ENCODE measurements at regions of chr18 and their contacts with region 1.

Region 1: DNA sequence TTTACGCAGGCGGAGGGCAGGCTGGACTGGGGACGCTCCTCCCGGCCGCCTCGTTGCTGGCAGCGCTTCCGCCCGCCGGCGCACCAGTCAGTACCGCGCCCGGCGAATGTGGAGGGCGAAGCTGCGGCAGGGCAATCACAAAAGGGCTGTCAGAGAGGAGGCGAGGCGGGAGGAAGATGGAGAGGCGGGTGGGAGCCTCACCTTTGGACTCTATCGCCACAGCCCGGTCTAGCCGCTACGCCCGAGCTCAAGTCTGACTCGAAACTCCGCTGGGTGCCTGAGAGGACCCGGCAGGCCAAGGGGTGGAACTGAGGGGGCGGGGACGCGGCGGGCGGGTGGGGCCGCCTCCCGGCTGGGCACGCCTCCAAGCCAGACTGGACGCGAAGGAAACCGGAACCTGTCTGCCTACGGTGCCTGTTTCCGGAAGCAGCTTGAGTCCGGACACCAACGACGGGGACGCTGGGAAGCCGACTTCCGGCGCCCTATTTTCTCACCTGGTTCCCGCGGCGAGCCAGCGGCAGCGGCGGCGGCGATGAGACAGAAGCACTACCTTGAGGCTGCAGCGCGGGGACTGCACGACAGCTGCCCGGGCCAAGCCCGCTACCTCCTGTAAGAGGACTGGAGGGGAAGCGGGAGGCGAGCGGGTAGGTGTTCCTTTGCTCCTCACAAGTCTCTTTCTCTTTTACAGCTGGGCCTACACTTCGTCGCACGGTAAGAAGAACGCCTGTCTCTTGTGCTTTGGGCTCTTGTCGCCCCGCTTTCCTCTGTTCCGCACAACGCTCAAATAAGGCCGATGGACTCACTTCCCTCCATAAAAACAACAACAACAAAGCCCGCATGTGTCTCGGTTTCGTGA is at the start of gene RMP24:
- DNase-seq: peak; percentile 80 to 93 (median 90)
- ATAC-seq: peak; percentile 94
- H3K4me3 ChIP-seq: peak within 1 kb of the TSS; percentile 76
- H3K4me3 Mint-ChIP-seq: peak within 1 kb of the TSS; percentile 83 to 100 (median 96)
- H3K27ac ChIP-seq: peak within 1 kb of the TSS; percentile 82
- H3K27ac Mint-ChIP-seq: peak within 1 kb of the TSS; percentile 91 to 99 (median 96)
- H3K4me1 ChIP-seq: peaks cover 33% of the 10 kb centered on the region in 2 donors
- H3K4me1 Mint-ChIP-seq: peaks cover 36 to 78% (median 67%) of the 10 kb centered on the region in 7 donors
- H3K27me3 ChIP-seq: no peaks in the 10 kb centered on the region
- H3K27me3 Mint-ChIP-seq: no peaks in the 10 kb centered on the region

Region 2: GRCh38 chr18:34867520-34867919 is 1104.9 kb before region 1 on chr18:
- CTCF ChIA-PET with region 1: no interaction called
- POLR2A ChIA-PET with region 1: no interaction called
- intact Hi-C with region 1: loop called (anchors 5 kb)
- DNase-seq: no peak
- ATAC-seq: no peak
- H3K4me3 ChIP-seq: no peak overlapping the region
- H3K4me3 Mint-ChIP-seq: no peak overlapping the region
- H3K27ac ChIP-seq: no peak overlapping the region
- H3K27ac Mint-ChIP-seq: no peak overlapping the region
- H3K4me1 ChIP-seq: no peaks in the 10 kb centered on the region
- H3K4me1 Mint-ChIP-seq: peaks cover 0 to 24% (median 9%) of the 10 kb centered on the region in 7 donors
- H3K27me3 ChIP-seq: no peaks in the 10 kb centered on the region
- H3K27me3 Mint-ChIP-seq: peaks cover 0 to 10% (median 0%) of the 10 kb centered on the region in 5 donors

Region 3: DNA sequence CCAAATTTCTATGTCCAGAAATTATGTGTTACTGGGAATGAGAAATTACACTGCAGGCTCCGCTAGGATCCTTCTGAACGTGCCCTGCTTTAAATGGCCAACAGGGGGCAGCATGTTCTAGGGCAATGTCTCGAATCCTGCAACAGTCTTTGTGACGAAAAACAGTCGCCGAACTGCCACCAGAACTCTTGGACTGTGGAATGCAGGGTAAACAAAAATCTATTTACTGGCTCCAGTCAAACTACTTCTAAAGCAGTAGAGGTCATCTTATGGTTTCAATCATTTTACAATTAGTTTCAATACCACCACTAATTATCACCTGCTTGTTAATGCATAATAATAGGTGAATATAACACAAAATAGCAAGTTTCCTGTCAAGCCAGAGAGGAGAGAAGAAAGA is 741.4 kb before region 1 on chr18:
- CTCF ChIA-PET with region 1: no interaction called
- POLR2A ChIA-PET with region 1: no interaction called
- intact Hi-C with region 1: loop called in 1 of 2 experiments (anchors 1 kb)
- DNase-seq: peak; percentile 49 to 80 (median 73)
- ATAC-seq: peak; percentile 97
- H3K4me3 ChIP-seq: no peak overlapping the region
- H3K4me3 Mint-ChIP-seq: peak overlapping the region in 9 of 10 donors; percentile 1 to 71 (median 53)
- H3K27ac ChIP-seq: no peak overlapping the region
- H3K27ac Mint-ChIP-seq: peak overlapping the region in 1 of 9 donors; percentile 37
- H3K4me1 ChIP-seq: no peaks in the 10 kb centered on the region
- H3K4me1 Mint-ChIP-seq: peaks cover 3 to 5% (median 4%) of the 10 kb centered on the region in 7 donors
- H3K27me3 ChIP-seq: no peaks in the 10 kb centered on the region
- H3K27me3 Mint-ChIP-seq: no peaks in the 10 kb centered on the region

Region 4: GRCh38 chr18:35267161-35267651 is 705.2 kb before region 1 on chr18:
- CTCF ChIA-PET with region 1: no interaction called
- POLR2A ChIA-PET with region 1: no interaction called
- intact Hi-C with region 1: loop called in 1 of 2 experiments (anchors 1 kb)
- DNase-seq: peak; percentile 37 to 62 (median 54)
- ATAC-seq: peak; percentile 90
- H3K4me3 ChIP-seq: peak overlapping the region; percentile 78
- H3K4me3 Mint-ChIP-seq: peak overlapping the region; percentile 85 to 99 (median 97)
- H3K27ac ChIP-seq: peak overlapping the region; percentile 74
- H3K27ac Mint-ChIP-seq: peak overlapping the region; percentile 83 to 98 (median 97)
- H3K4me1 ChIP-seq: peaks cover 0 to 7% of the 10 kb centered on the region in 2 donors
- H3K4me1 Mint-ChIP-seq: peaks cover 13 to 35% (median 26%) of the 10 kb centered on the region in 7 donors
- H3K27me3 ChIP-seq: no peaks in the 10 kb centered on the region
- H3K27me3 Mint-ChIP-seq: no peaks in the 10 kb centered on the region

Region 5: DNA sequence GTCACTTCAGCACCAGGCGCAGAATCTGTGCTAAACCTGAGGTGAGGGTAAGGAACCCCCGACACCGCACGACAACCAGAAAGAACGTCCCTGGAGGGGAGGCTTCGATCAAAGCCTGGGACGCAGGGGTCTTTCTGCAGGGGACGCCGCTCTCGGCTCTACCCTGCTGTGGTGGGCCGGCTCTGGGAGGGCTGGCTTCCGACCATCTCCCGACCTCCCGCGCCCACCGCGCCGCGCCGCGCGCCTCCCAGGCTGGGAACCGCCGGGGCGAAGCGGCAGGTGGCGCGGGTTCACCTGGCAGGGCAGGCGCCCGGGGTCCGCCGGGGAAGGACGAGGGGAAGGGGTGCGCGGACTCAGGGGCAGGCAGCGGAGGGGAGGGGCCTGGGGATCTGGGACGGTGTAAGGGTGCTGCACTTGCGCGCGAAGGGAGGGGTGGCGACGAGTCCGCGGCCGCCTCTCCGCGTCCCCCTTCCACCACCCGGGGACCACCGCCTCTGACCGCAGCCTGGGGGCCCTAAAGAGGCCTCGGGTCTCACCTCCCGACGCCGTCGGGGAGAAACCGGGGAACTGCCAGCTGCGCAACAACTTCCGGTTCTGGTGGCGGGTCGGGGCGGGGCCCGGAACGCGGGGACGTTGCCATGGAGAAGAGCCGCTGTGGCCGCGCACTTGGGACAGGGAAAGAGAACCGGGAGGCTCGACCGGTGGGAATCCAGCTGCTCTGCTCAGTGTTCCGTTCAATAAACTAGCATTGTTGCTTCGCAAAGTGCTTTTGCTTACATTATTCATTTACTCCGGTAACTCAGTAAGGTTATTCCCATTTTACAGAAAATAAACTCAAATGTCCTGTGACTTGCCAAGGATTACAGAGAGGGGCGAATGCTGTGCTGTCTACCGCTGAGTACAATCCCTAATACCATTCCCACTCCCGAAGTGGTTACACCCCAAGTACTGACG is 595.4 kb before region 1 on chr18 and contains the start of gene ZNF396:
- CTCF ChIA-PET with region 1: no interaction called
- POLR2A ChIA-PET with region 1: no interaction called
- intact Hi-C with region 1: loop called in 1 of 2 experiments (anchors 1 kb)
- DNase-seq: peak; percentile 51 to 72 (median 58)
- ATAC-seq: peak; percentile 81
- H3K4me3 ChIP-seq: peak within 1 kb of the TSS; percentile 75
- H3K4me3 Mint-ChIP-seq: peak within 1 kb of the TSS; percentile 80 to 92 (median 88)
- H3K27ac ChIP-seq: peak within 1 kb of the TSS; percentile 55
- H3K27ac Mint-ChIP-seq: peak within 1 kb of the TSS; percentile 44 to 90 (median 74)
- H3K4me1 ChIP-seq: no peaks in the 10 kb centered on the region
- H3K4me1 Mint-ChIP-seq: peaks cover 3 to 12% (median 10%) of the 10 kb centered on the region in 7 donors
- H3K27me3 ChIP-seq: no peaks in the 10 kb centered on the region
- H3K27me3 Mint-ChIP-seq: peaks cover 0 to 29% (median 0%) of the 10 kb centered on the region in 5 donors
- total RNA-seq, gene ZNF396: 0.11 to 8.2 (median 0.54) TPM

Region 6: DNA sequence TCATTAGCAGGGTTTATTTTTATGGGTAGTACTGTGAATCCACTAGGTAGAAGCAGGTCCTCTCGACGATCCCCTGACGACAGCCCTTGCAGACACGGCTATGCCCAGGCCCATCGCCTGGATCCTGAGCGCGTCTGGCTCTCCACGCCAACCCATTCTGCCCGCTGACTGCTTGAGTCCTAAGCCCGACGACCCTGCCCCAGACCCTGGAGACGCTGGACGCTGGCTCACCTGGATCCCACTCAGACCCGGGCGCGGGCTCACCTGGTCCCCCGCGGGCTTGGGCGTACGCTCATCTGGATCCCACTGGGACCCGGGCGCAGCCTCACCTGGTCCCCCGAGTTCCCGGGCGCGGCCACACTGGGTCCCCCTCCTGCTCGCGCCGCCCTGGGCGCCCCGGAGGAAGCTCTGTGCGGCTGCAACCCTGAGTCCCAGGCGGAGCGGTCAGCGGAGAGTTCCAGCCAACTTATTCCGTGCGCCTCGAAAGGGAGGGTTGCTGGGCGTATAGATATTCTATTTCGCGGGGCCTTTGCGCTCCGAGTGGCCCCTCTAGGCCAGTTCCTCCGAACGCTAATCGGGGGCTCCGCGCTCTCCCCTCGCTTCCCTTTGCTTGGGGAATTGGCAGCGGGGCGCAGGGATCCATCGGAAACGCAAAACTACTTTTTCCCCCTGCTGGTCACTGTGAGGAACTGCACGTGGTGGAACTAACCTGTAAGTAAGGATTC is 22.4 kb before region 1 on chr18:
- CTCF ChIA-PET with region 1: no interaction called
- POLR2A ChIA-PET with region 1: no interaction called
- intact Hi-C with region 1: loop called (anchors 1 to 2 kb)
- DNase-seq: peak; percentile 36 to 68 (median 57)
- ATAC-seq: peak; percentile 89
- H3K4me3 ChIP-seq: peak overlapping the region; percentile 70
- H3K4me3 Mint-ChIP-seq: peak overlapping the region; percentile 78 to 93 (median 88)
- H3K27ac ChIP-seq: no peak overlapping the region
- H3K27ac Mint-ChIP-seq: peak overlapping the region in 4 of 9 donors; percentile 21 to 59 (median 28)
- H3K4me1 ChIP-seq: peaks cover 4 to 8% of the 10 kb centered on the region in 2 donors
- H3K4me1 Mint-ChIP-seq: peaks cover 0 to 9% (median 4%) of the 10 kb centered on the region in 7 donors
- H3K27me3 ChIP-seq: peaks cover 0 to 4% of the 10 kb centered on the region in 2 donors
- H3K27me3 Mint-ChIP-seq: peaks cover 14 to 33% (median 24%) of the 10 kb centered on the region in 5 donors

Region 7: GRCh38 chr18:36129300-36130038 is 157.0 kb after region 1 on chr18 and contains the starts of genes ELP2 and SLC39A6:
- CTCF ChIA-PET with region 1: no interaction called
- POLR2A ChIA-PET with region 1: interaction called, 17 read pairs
- intact Hi-C with region 1: loop called (anchors 1 kb)
- DNase-seq: peak; percentile 89 to 98 (median 95)
- ATAC-seq: peak; percentile 94
- H3K4me3 ChIP-seq: peak within 1 kb of the TSS; percentile 99
- H3K4me3 Mint-ChIP-seq: peak within 1 kb of the TSS; percentile 87 to 98 (median 95)
- H3K27ac ChIP-seq: peak within 1 kb of the TSS; percentile 96
- H3K27ac Mint-ChIP-seq: peak within 1 kb of the TSS; percentile 93 to 99 (median 98)
- H3K4me1 ChIP-seq: peaks cover 33 to 35% of the 10 kb centered on the region in 2 donors
- H3K4me1 Mint-ChIP-seq: peaks cover 39 to 81% (median 61%) of the 10 kb centered on the region in 7 donors
- H3K27me3 ChIP-seq: no peaks in the 10 kb centered on the region
- H3K27me3 Mint-ChIP-seq: no peaks in the 10 kb centered on the region
- total RNA-seq, gene ELP2: 79.3 to 177 (median 150) TPM
- total RNA-seq, gene SLC39A6: 12.1 to 25.2 (median 16.6) TPM

Region 8: GRCh38 chr18:36247036-36247435 is 274.6 kb after region 1 on chr18:
- CTCF ChIA-PET with region 1: no interaction called
- POLR2A ChIA-PET with region 1: no interaction called
- intact Hi-C with region 1: no loop called
- DNase-seq: no peak
- ATAC-seq: no peak
- H3K4me3 ChIP-seq: no peak overlapping the region
- H3K4me3 Mint-ChIP-seq: no peak overlapping the region
- H3K27ac ChIP-seq: no peak overlapping the region
- H3K27ac Mint-ChIP-seq: no peak overlapping the region
- H3K4me1 ChIP-seq: no peaks in the 10 kb centered on the region
- H3K4me1 Mint-ChIP-seq: no peaks in the 10 kb centered on the region
- H3K27me3 ChIP-seq: no peaks in the 10 kb centered on the region
- H3K27me3 Mint-ChIP-seq: peaks cover 17 to 62% (median 51%) of the 10 kb centered on the region in 5 donors